IMR-90 (cell line): ENCODE measurements at regions of chr11 and their contacts with region 1.

Region 1: DNA sequence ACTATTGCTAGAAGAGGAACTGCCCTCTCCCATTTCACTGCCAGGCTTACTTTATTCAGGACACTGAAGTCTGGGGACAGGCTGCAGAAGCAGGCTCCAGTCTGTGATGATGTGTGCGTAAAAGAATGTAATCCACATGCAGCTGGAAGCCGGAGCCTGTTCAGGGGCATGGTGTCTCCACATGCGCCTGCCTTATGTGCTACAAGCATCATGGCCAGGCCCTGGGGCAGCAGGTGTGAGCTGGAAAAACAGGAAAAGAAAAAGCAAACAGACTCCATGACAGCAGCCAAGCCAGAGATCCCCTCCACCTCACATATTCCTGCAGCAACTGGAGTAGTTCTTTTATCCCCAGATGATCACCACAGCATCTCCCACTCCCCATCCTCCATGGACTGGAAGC is 33.4 kb downstream of the ARFGAP2 start:
- DNase-seq: peak; percentile 97
- ATAC-seq: peak; percentile 100
- H3K4me3 ChIP-seq: no peak overlapping the region
- H3K27ac ChIP-seq: peak overlapping the region; percentile 61; the same call in 1 of the 2 replicates
- H3K4me1 ChIP-seq: peaks cover 10% of the 10 kb centered on the region
- H3K27me3 ChIP-seq: no peaks in the 10 kb centered on the region
- CTCF ChIP-seq: no peak
- POLR2A ChIP-seq: no peak
- RAD21 ChIP-seq: peak; percentile 28; the same call in 1 of the 2 replicates

Region 2: DNA sequence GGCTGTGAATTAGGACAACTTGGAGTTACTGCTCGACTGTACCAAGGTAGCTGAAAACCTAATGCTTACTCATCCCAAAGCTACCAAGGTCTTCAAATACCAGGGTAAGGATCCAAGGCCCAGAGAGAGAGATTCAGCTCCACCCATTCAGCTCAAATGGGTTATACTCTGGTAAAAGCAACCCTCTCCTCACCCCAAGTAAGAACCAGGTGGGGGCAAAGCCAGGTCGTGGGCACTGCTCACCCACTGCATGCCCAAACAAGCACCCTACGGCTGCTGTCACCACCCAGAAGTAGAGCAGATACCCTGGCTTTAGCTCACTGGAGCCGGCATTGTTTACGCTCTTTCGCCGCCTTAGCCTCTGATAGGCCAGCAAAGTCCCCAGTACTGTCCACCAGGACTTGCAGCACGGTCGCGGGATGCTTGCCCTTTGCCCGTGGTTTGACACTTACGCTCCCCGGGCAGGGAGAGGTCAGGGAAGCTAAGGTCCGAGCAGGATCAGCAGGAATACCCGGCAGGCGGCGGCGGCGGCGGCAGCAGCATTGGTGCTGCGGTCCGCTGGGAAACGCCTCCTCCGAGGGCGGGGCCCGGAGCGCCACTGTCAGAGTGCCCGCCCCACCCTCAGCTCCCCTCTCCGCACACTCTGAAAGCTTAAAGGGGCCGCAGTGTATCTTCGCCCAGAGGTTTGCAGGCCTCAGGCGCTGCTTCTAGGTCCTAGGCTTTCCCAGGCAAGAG is 316.8 kb before region 1 on chr11:
- CTCF ChIA-PET with region 1: no interaction called
- POLR2A ChIA-PET with region 1: interaction called, 13 read pairs
- dilution Hi-C with region 1: no loop called
- in situ Hi-C with region 1: no loop called
- intact Hi-C with region 1: no loop called
- DNase-seq: peak; percentile 68
- ATAC-seq: peak; percentile 99
- H3K4me3 ChIP-seq: peak overlapping the region; percentile 85
- H3K27ac ChIP-seq: peak overlapping the region; percentile 70
- H3K4me1 ChIP-seq: peaks cover 6% of the 10 kb centered on the region
- H3K27me3 ChIP-seq: no peaks in the 10 kb centered on the region
- CTCF ChIP-seq: no peak
- POLR2A ChIP-seq: no peak
- RAD21 ChIP-seq: no peak

Region 3: DNA sequence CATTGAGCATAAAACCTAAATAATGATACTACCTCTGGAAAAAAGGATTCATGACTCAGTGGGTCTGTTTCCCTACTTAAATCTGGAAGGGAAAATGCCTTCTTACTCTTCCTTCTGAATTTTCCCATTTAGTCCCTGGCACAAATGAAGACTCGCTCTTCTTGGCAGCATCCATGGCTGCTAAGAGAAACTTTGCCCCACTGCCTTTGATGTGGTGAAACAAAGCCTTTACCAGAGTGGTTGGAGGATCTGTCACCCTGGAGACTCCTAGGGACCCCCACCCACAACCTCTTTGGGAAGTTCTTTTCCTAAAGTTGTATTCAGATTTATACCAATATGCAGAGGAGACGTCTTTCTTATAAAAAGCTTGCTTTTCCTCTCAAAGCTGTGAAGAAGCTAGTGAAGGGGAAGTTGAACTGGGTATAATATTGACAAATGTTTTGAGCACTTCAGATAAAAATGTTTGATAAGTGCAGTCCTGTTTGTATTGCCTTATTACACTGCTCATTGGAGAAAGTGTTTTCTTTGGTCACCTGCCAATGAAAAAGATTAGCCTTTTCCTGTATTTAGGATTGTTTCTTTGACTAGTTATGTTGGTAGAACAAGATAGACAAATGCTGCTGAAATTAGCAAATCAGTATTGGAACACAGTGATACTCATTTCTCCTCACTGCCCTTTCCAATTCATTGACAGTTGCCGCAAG is 44.0 kb before region 1 on chr11:
- CTCF ChIA-PET with region 1: interaction called, 10 read pairs
- POLR2A ChIA-PET with region 1: no interaction called
- dilution Hi-C with region 1: no loop called
- in situ Hi-C with region 1: no loop called
- intact Hi-C with region 1: no loop called
- DNase-seq: peak; percentile 47
- ATAC-seq: no peak
- H3K4me3 ChIP-seq: no peak overlapping the region
- H3K27ac ChIP-seq: no peak overlapping the region
- H3K4me1 ChIP-seq: peaks cover 4% of the 10 kb centered on the region; the same call in 1 of the 2 replicates
- H3K27me3 ChIP-seq: no peaks in the 10 kb centered on the region
- CTCF ChIP-seq: no peak
- POLR2A ChIP-seq: no peak
- RAD21 ChIP-seq: no peak